ENCODE measurements at regions of chrX and their contacts with region 1.

Region 1: DNA sequence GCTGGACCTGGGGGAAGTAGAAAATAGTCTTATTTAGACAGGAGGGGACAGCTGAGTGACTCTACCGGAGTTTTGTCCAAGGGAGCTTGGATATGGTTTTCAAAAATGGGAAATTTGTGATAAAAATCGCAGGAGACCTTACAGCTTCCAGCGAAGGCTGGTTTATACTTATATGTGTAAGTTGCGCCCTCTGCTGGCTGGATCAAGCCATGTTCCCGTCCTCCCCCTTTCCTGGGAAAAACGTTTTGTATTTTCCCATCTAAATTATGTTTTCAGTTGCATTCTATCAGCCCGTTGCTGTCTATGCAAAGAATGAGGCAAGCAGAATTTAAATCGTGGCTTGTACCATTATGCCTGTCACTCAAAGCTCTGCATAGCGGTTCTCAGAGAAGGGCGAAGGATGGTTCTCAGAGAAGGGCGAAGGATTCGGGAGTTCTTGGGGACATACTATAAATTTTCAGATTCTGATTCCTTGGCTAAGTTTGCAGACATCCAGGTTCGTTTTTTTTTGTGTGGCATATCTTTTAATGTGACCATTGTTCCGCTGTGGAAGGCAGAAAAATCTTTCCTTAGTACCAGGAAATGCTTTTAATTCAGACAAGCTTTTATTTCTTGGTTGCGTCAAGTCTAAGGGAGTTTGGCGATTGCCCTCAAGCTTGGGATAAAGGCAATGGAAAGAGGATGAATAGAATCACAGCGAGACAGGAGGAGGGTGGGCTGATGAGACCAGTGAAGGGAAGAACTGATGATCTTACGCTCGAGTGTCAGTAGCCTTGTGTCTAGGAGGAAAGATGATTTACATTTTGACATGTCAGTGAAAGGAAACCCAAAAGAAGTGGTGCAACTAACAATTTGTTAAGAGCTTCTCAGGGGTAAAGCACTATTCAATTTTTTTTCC is 128.5 kb upstream of the ARX start:
- DNase-seq: peak; percentile 26
- ATAC-seq: peak; percentile 69
- H3K4me3 ChIP-seq: no peak overlapping the region
- H3K27ac ChIP-seq: no peak overlapping the region
- H3K4me1 ChIP-seq: no peaks in the 10 kb centered on the region
- H3K27me3 ChIP-seq: no peaks in the 10 kb centered on the region
- CTCF ChIP-seq: peak; percentile 45 to 63 (median 52); a peak in 4 of 6 replicates
- POLR2A ChIP-seq: no peak
- RAD21 ChIP-seq: peak; percentile 68

Region 2: DNA sequence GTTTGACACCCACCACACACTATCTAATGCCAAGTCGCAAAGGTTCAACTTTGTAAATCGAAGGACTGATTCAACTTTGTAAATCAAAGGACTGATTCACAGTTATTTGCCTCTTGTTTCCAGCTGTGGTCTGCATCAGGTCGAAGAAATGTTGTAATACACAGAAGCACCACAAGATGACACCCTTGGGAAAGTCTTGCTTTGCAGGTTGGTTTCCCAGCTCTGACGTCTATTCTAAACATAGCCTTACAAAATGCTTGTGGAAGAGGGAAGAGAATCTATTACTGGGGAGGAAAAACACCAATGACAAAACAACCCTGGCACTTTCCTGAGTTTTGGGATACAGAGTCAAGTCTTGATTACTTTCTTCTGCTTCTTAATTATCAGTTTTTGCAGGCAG is 748.5 kb before region 1 on chrX:
- CTCF ChIA-PET with region 1: interaction called, 4 read pairs
- POLR2A ChIA-PET with region 1: no interaction called
- RAD21 ChIA-PET with region 1: no interaction called
- intact Hi-C with region 1: loop called (anchors 10 kb)
- DNase-seq: peak; percentile 24
- ATAC-seq: peak; percentile 75
- H3K4me3 ChIP-seq: no peak overlapping the region
- H3K27ac ChIP-seq: no peak overlapping the region
- H3K4me1 ChIP-seq: no peaks in the 10 kb centered on the region
- H3K27me3 ChIP-seq: peaks cover 2% of the 10 kb centered on the region; the same call in 1 of the 2 replicates
- CTCF ChIP-seq: peak; percentile 45 to 65 (median 60); a peak in 4 of 6 replicates
- POLR2A ChIP-seq: no peak
- RAD21 ChIP-seq: peak; percentile 84

Region 3: GRCh38 chrX:24515447-24515846 is 628.8 kb before region 1 on chrX:
- CTCF ChIA-PET with region 1: no interaction called
- POLR2A ChIA-PET with region 1: no interaction called
- RAD21 ChIA-PET with region 1: no interaction called
- intact Hi-C with region 1: loop called (anchors 10 kb)
- DNase-seq: no peak
- ATAC-seq: no peak
- H3K4me3 ChIP-seq: no peak overlapping the region
- H3K27ac ChIP-seq: no peak overlapping the region
- H3K4me1 ChIP-seq: no peaks in the 10 kb centered on the region
- H3K27me3 ChIP-seq: no peaks in the 10 kb centered on the region
- CTCF ChIP-seq: no peak; a peak in 1 of 6 replicates
- POLR2A ChIP-seq: no peak
- RAD21 ChIP-seq: peak; percentile 16; the same call in 1 of the 2 replicates

Region 4: DNA sequence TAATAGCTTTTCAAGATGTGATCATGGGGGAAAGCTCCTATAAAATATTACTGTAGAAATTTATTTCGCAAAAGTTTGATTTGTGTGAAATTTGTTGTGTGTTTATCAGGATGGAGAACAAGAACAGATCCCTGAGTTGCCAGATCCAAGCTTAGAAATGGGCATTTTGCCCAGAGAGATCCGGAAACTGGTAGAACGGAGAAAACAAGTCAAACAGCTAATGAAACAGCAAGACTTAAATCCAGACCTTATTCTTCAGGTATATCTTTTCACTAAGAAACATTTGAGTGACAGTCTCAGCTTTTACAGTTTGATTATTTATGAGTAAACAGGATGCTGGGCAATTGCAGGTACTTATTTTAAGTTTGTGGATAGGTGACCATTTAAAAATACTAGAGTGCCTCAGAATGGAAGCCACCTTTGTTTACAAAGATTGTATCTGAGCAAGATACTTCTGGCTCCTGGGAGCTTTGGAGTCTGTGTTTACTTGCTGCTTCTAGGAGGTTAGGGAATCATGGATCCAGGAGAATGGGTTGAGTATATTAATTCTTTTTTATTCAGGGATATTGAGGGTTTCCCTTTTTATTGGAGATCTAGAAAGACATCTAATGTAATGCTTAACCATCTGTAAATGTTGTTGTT is 396.0 kb before region 1 on chrX:
- CTCF ChIA-PET with region 1: interaction called, 21 read pairs
- POLR2A ChIA-PET with region 1: no interaction called
- RAD21 ChIA-PET with region 1: no interaction called
- intact Hi-C with region 1: loop called (anchors 1 kb)
- DNase-seq: no peak
- ATAC-seq: no peak
- H3K4me3 ChIP-seq: no peak overlapping the region
- H3K27ac ChIP-seq: no peak overlapping the region
- H3K4me1 ChIP-seq: no peaks in the 10 kb centered on the region
- H3K27me3 ChIP-seq: no peaks in the 10 kb centered on the region
- CTCF ChIP-seq: no peak
- POLR2A ChIP-seq: no peak
- RAD21 ChIP-seq: no peak

Region 5: DNA sequence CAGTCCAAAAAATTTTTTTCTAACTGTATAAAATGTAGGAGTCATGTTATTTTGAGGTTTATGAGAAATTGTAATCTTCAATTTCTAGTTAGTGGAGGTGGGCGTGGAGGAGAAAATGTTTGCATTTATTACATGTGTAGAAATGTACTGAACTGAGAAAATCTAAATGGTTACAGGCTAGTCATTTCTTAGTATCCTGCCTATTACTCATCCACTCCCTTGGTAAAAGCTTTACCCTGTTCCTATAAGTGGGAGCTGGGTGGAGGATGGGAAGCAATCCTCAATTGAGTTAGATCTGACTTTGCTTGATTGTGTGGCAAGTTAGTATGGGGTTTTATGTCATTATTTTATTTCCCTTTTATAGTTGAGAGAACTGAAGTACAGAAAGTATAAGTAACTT is 376.7 kb before region 1 on chrX:
- CTCF ChIA-PET with region 1: no interaction called
- POLR2A ChIA-PET with region 1: no interaction called
- RAD21 ChIA-PET with region 1: no interaction called
- intact Hi-C with region 1: loop called (anchors 5 kb)
- DNase-seq: no peak
- ATAC-seq: no peak
- H3K4me3 ChIP-seq: no peak overlapping the region
- H3K27ac ChIP-seq: no peak overlapping the region
- H3K4me1 ChIP-seq: no peaks in the 10 kb centered on the region
- H3K27me3 ChIP-seq: no peaks in the 10 kb centered on the region
- CTCF ChIP-seq: no peak
- POLR2A ChIP-seq: no peak
- RAD21 ChIP-seq: no peak

Region 6: GRCh38 chrX:24838629-24839028 is 305.7 kb before region 1 on chrX:
- CTCF ChIA-PET with region 1: interaction called, 9 read pairs
- POLR2A ChIA-PET with region 1: no interaction called
- RAD21 ChIA-PET with region 1: no interaction called
- intact Hi-C with region 1: loop called (anchors 2 kb)
- DNase-seq: no peak
- ATAC-seq: no peak
- H3K4me3 ChIP-seq: no peak overlapping the region
- H3K27ac ChIP-seq: no peak overlapping the region
- H3K4me1 ChIP-seq: no peaks in the 10 kb centered on the region
- H3K27me3 ChIP-seq: no peaks in the 10 kb centered on the region
- CTCF ChIP-seq: peak; percentile 23 to 53 (median 29); a peak in 3 of 6 replicates
- POLR2A ChIP-seq: no peak
- RAD21 ChIP-seq: peak; percentile 44

Region 7: GRCh38 chrX:25034889-25035288 is 109.4 kb before region 1 on chrX:
- CTCF ChIA-PET with region 1: interaction called, 7 read pairs
- POLR2A ChIA-PET with region 1: no interaction called
- RAD21 ChIA-PET with region 1: no interaction called
- intact Hi-C with region 1: loop called (anchors 1 kb)
- DNase-seq: no peak
- ATAC-seq: peak; percentile 75
- H3K4me3 ChIP-seq: no peak overlapping the region
- H3K27ac ChIP-seq: no peak overlapping the region
- H3K4me1 ChIP-seq: no peaks in the 10 kb centered on the region
- H3K27me3 ChIP-seq: no peaks in the 10 kb centered on the region
- CTCF ChIP-seq: peak; percentile 28 to 40 (median 32); a peak in 3 of 6 replicates
- POLR2A ChIP-seq: no peak
- RAD21 ChIP-seq: peak; percentile 52